Natural killer cell (primary cell): ENCODE measurements at regions of chr6 and their contacts with region 1.

Region 1: DNA sequence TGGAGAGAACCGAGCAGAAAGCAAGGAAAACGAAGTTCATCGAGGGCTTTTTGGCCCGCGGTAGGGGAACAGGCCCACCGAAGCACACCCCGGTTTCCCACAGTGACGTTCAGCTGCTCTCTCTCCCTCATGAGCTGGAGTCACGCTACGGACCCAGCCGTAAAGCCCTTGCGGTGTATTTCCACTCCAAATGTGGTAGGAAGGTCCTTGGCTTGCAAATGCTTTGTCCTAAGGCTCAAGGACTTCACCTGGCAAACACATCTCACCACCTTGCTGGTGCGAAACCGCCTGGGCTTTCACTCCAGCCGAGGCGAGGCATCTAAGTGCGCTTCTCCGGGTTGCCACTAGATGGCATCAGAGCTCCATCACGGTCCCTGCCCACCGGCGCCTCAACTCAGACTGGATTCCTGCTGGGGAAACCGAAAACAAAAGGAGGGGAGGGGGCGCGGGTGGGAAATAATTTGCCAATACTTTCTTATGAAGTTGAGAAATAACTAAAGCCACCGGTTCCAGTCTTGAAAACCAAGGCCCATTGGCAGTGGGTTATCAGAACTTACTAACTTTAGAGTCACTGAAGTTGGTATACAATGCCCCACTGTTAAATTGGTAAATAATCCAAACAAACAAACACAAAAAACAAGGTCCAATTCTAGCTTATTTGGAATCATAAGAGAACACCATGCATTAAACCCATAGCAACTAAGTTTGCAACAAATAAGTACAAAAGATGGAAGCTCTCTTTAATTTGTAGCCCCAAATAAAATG is 13.4 kb upstream of the FOXC1 start:
- DNase-seq: peak; percentile 65 to 84
- ATAC-seq: peak; percentile 80 to 96 (median 96)
- H3K4me3 ChIP-seq: no peak overlapping the region
- H3K4me3 Mint-ChIP-seq: no peak overlapping the region
- H3K27ac ChIP-seq: no peak overlapping the region
- H3K27ac Mint-ChIP-seq: no peak overlapping the region
- H3K4me1 ChIP-seq: peaks cover 11% of the 10 kb centered on the region
- H3K4me1 Mint-ChIP-seq: peaks cover 4 to 5% of the 10 kb centered on the region in 2 donors
- H3K27me3 ChIP-seq: peaks cover 7% of the 10 kb centered on the region
- H3K27me3 Mint-ChIP-seq: peaks cover 69 to 78% of the 10 kb centered on the region in 2 donors
- CTCF ChIP-seq: peak; percentile 86

Region 2: GRCh38 chr6:1039191-1039590 is 557.1 kb before region 1 on chr6:
- intact Hi-C with region 1: no loop called
- DNase-seq: no peak
- ATAC-seq: no peak
- H3K4me3 ChIP-seq: no peak overlapping the region
- H3K4me3 Mint-ChIP-seq: no peak overlapping the region
- H3K27ac ChIP-seq: no peak overlapping the region
- H3K27ac Mint-ChIP-seq: no peak overlapping the region
- H3K4me1 ChIP-seq: no peaks in the 10 kb centered on the region
- H3K4me1 Mint-ChIP-seq: no peaks in the 10 kb centered on the region
- H3K27me3 ChIP-seq: no peaks in the 10 kb centered on the region
- H3K27me3 Mint-ChIP-seq: peaks cover 21 to 33% of the 10 kb centered on the region in 2 donors
- CTCF ChIP-seq: no peak

Region 3: DNA sequence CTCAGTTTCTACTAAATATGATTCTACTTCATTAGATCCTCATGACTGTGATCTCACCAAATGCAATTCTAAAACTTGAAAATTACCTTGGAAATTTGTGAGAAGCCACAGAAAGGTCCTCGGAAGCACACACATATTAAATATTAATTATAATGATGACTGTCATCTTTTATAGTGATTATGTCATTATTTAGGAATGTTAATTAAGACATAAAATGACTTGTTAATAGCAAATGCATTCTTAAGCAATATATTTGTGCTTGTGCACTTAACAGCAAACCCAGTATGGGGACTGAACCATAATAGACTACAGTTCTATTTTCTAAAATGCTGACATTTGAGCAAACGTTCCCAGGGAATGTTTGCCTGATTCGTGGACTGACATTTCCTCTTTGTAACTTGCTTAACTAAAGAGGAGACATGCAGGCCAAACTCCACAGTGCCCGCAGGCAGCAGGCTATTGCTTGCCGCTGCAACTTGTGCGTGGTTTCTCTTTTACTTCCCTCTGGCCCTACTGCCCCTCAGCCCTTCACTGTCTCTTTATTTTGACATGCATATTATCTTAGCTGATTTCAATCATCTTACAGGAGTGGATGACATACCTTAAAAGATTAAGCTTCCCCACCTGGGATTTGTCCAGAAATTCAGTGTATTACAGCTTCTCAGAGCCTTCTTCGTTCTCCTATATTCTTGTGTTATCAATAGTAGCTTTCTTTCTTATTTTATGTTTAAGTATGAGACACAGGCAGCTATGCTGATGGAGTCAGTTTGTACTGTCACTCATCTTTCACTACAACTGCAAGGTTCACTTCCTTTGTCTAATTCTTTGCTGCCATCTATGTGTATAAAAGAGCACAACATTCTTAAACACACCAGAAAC is 507.6 kb after region 1 on chr6:
- intact Hi-C with region 1: loop called (anchors 2 kb)
- DNase-seq: peak in 1 of 2 donors; percentile 56
- ATAC-seq: peak in 1 of 3 donors; percentile 71
- H3K4me3 ChIP-seq: no peak overlapping the region
- H3K4me3 Mint-ChIP-seq: no peak overlapping the region
- H3K27ac ChIP-seq: no peak overlapping the region
- H3K27ac Mint-ChIP-seq: no peak overlapping the region
- H3K4me1 ChIP-seq: no peaks in the 10 kb centered on the region
- H3K4me1 Mint-ChIP-seq: peaks cover 5% of the 10 kb centered on the region in 2 donors
- H3K27me3 ChIP-seq: no peaks in the 10 kb centered on the region
- H3K27me3 Mint-ChIP-seq: peaks cover 0 to 5% of the 10 kb centered on the region in 2 donors
- CTCF ChIP-seq: peak; percentile 44

Region 4: GRCh38 chr6:2196079-2196679 is 599.9 kb after region 1 on chr6:
- intact Hi-C with region 1: loop called (anchors 1 kb)
- DNase-seq: peak in 1 of 2 donors; percentile 72
- ATAC-seq: peak; percentile 73 to 82 (median 78)
- H3K4me3 ChIP-seq: no peak overlapping the region
- H3K4me3 Mint-ChIP-seq: no peak overlapping the region
- H3K27ac ChIP-seq: no peak overlapping the region
- H3K27ac Mint-ChIP-seq: no peak overlapping the region
- H3K4me1 ChIP-seq: no peaks in the 10 kb centered on the region
- H3K4me1 Mint-ChIP-seq: no peaks in the 10 kb centered on the region
- H3K27me3 ChIP-seq: no peaks in the 10 kb centered on the region
- H3K27me3 Mint-ChIP-seq: no peaks in the 10 kb centered on the region
- CTCF ChIP-seq: peak; percentile 87

Region 5: DNA sequence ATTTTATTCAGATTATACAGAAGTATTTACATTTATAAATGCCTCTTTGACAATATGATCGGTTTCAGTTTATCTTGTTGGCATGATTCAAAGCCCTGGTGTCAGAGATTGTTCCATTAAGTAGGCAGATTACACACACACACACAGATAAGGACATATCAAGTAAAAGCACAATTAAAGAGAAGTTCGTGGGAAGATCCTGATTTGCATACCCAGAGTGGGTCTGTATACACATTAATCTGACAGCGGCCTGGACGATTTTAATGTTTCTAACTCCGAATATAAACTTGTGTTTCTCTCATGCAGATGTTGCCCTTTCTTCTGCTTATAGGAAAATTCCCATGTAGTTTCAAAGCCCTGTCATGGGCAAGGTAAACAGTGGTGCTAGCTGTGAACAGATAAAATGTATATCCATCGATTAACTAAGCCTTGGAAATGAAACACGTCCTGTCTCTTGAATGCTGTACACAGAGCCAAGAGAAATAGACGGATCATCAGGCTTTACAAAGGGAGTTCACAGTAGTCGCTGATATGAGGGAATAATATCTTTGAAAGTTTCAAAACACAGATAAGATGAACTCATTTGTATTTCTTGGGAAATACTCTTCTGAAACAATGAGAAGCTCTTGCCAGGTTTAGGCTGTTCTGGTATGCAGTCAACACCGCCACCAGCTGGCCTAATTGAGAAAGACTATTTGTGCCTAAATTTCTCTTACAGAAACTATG is 757.3 kb after region 1 on chr6:
- intact Hi-C with region 1: loop called (anchors 1 kb)
- DNase-seq: peak; percentile 18 to 66
- ATAC-seq: peak in 1 of 3 donors; percentile 61
- H3K4me3 ChIP-seq: no peak overlapping the region
- H3K4me3 Mint-ChIP-seq: no peak overlapping the region
- H3K27ac ChIP-seq: no peak overlapping the region
- H3K27ac Mint-ChIP-seq: no peak overlapping the region
- H3K4me1 ChIP-seq: no peaks in the 10 kb centered on the region
- H3K4me1 Mint-ChIP-seq: no peaks in the 10 kb centered on the region
- H3K27me3 ChIP-seq: no peaks in the 10 kb centered on the region
- H3K27me3 Mint-ChIP-seq: no peaks in the 10 kb centered on the region
- CTCF ChIP-seq: peak; percentile 69

Region 6: GRCh38 chr6:2448820-2449571 is 852.7 kb after region 1 on chr6:
- intact Hi-C with region 1: loop called (anchors 5 kb)
- DNase-seq: peak in 1 of 2 donors; percentile 51
- ATAC-seq: peak; percentile 53 to 63 (median 55)
- H3K4me3 ChIP-seq: no peak overlapping the region
- H3K4me3 Mint-ChIP-seq: peak overlapping the region; percentile 43
- H3K27ac ChIP-seq: no peak overlapping the region
- H3K27ac Mint-ChIP-seq: peak overlapping the region in 1 of 2 donors; percentile 68
- H3K4me1 ChIP-seq: peaks cover 3% of the 10 kb centered on the region
- H3K4me1 Mint-ChIP-seq: peaks cover 6% of the 10 kb centered on the region in 2 donors
- H3K27me3 ChIP-seq: no peaks in the 10 kb centered on the region
- H3K27me3 Mint-ChIP-seq: peaks cover 0 to 12% of the 10 kb centered on the region in 2 donors
- CTCF ChIP-seq: peak; percentile 59

Region 7: GRCh38 chr6:2634139-2634964 is 1038.1 kb after region 1 on chr6:
- intact Hi-C with region 1: loop called (anchors 1 kb)
- DNase-seq: peak; percentile 74 to 89
- ATAC-seq: peak; percentile 91 to 99 (median 96)
- H3K4me3 ChIP-seq: peak overlapping the region; percentile 27
- H3K4me3 Mint-ChIP-seq: peak overlapping the region; percentile 81
- H3K27ac ChIP-seq: no peak overlapping the region
- H3K27ac Mint-ChIP-seq: no peak overlapping the region
- H3K4me1 ChIP-seq: peaks cover 8% of the 10 kb centered on the region
- H3K4me1 Mint-ChIP-seq: peaks cover 0 to 5% of the 10 kb centered on the region in 2 donors
- H3K27me3 ChIP-seq: peaks cover 2% of the 10 kb centered on the region
- H3K27me3 Mint-ChIP-seq: peaks cover 11 to 20% of the 10 kb centered on the region in 2 donors
- CTCF ChIP-seq: peak; percentile 98

Region 8: GRCh38 chr6:2749969-2750600 is 1153.8 kb after region 1 on chr6:
- intact Hi-C with region 1: loop called (anchors 1 kb)
- DNase-seq: peak; percentile 46 to 82
- ATAC-seq: peak; percentile 71 to 81 (median 76)
- H3K4me3 ChIP-seq: no peak overlapping the region
- H3K4me3 Mint-ChIP-seq: no peak overlapping the region
- H3K27ac ChIP-seq: no peak overlapping the region
- H3K27ac Mint-ChIP-seq: peak overlapping the region in 1 of 2 donors; percentile 24
- H3K4me1 ChIP-seq: peaks cover 3% of the 10 kb centered on the region
- H3K4me1 Mint-ChIP-seq: peaks cover 11 to 17% of the 10 kb centered on the region in 2 donors
- H3K27me3 ChIP-seq: no peaks in the 10 kb centered on the region
- H3K27me3 Mint-ChIP-seq: peaks cover 13 to 29% of the 10 kb centered on the region in 2 donors
- CTCF ChIP-seq: peak; percentile 94